Caco-2 (cell line): ENCODE measurements at regions of chr7 and their contacts with region 1.

Region 1: GRCh38 chr7:107799647-107800264 is 3.3 kb downstream of the SLC26A3 start:
- DNase-seq: peak in 1 of 2 experiments; percentile 53
- H3K4me3 ChIP-seq: no peak overlapping the region
- H3K4me3 Mint-ChIP-seq: peak overlapping the region; percentile 8
- H3K27ac Mint-ChIP-seq: no peak overlapping the region
- H3K4me1 ChIP-seq: peaks cover 28% of the 10 kb centered on the region
- H3K4me1 Mint-ChIP-seq: peaks cover 38% of the 10 kb centered on the region
- H3K27me3 ChIP-seq: no peaks in the 10 kb centered on the region
- H3K27me3 Mint-ChIP-seq: no peaks in the 10 kb centered on the region
- CTCF ChIP-seq: no peak

Region 2: DNA sequence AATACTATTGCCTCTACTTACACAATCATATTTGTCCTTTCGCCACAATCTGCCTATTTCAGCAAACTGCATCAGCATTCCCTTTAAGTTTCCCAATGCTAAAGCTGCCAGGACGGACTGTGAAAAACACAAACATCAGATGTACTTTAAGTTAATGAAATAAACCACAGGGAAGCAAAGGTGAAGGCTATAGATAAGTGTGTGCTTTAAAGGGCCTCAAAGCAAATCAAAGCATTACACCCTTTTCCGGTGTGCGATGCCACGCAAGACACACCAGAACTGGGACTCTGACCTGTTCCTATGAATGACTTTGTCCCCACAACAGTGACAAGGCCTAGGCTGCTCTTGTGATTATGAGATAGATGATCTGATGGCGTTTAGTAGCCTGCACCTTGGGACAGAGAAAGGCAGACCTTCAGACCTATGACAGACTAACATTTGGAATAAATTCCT is 20.1 kb before region 1 on chr7:
- CTCF ChIA-PET with region 1: no interaction called
- POLR2A ChIA-PET with region 1: no interaction called
- intact Hi-C with region 1: loop called (anchors 2 kb)
- DNase-seq: peak; percentile 15 to 68
- H3K4me3 ChIP-seq: no peak overlapping the region
- H3K4me3 Mint-ChIP-seq: no peak overlapping the region
- H3K27ac Mint-ChIP-seq: peak overlapping the region; percentile 49
- H3K4me1 ChIP-seq: peaks cover 13% of the 10 kb centered on the region
- H3K4me1 Mint-ChIP-seq: peaks cover 11% of the 10 kb centered on the region
- H3K27me3 ChIP-seq: no peaks in the 10 kb centered on the region
- H3K27me3 Mint-ChIP-seq: no peaks in the 10 kb centered on the region
- CTCF ChIP-seq: no peak

Region 3: GRCh38 chr7:107836237-107837144 is 36.7 kb after region 1 on chr7:
- CTCF ChIA-PET with region 1: no interaction called
- POLR2A ChIA-PET with region 1: no interaction called
- intact Hi-C with region 1: loop called (anchors 2 kb)
- DNase-seq: peak; percentile 47 to 67
- H3K4me3 ChIP-seq: no peak overlapping the region
- H3K4me3 Mint-ChIP-seq: no peak overlapping the region
- H3K27ac Mint-ChIP-seq: no peak overlapping the region
- H3K4me1 ChIP-seq: peaks cover 24% of the 10 kb centered on the region
- H3K4me1 Mint-ChIP-seq: peaks cover 18% of the 10 kb centered on the region
- H3K27me3 ChIP-seq: no peaks in the 10 kb centered on the region
- H3K27me3 Mint-ChIP-seq: no peaks in the 10 kb centered on the region
- CTCF ChIP-seq: no peak

Region 4: GRCh38 chr7:107860981-107861652 is 61.4 kb after region 1 on chr7:
- CTCF ChIA-PET with region 1: no interaction called
- POLR2A ChIA-PET with region 1: no interaction called
- intact Hi-C with region 1: loop called (anchors 5 kb)
- DNase-seq: no peak
- H3K4me3 ChIP-seq: no peak overlapping the region
- H3K4me3 Mint-ChIP-seq: peak overlapping the region; percentile 4
- H3K27ac Mint-ChIP-seq: no peak overlapping the region
- H3K4me1 ChIP-seq: peaks cover 26% of the 10 kb centered on the region
- H3K4me1 Mint-ChIP-seq: peaks cover 18% of the 10 kb centered on the region
- H3K27me3 ChIP-seq: no peaks in the 10 kb centered on the region
- H3K27me3 Mint-ChIP-seq: no peaks in the 10 kb centered on the region
- CTCF ChIP-seq: no peak